Breast epithelium (tissue), 4 donors: ENCODE measurements at regions of chr3 and their contacts with region 1.

Region 1: GRCh38 chr3:27888562-27888961 is 166.4 kb upstream of the EOMES start:
- DNase-seq: no peak
- H3K4me3 ChIP-seq: no peak overlapping the region
- H3K27ac ChIP-seq: no peak overlapping the region
- H3K4me1 ChIP-seq: no peaks in the 10 kb centered on the region
- H3K27me3 ChIP-seq: no peaks in the 10 kb centered on the region
- CTCF ChIP-seq: no peak
- POLR2A ChIP-seq: no peak

Region 2: GRCh38 chr3:28134792-28135375 is 246.3 kb after region 1 on chr3:
- intact Hi-C with region 1: loop called (anchors 5 kb)
- DNase-seq: no peak
- H3K4me3 ChIP-seq: no peak overlapping the region
- H3K27ac ChIP-seq: no peak overlapping the region
- H3K4me1 ChIP-seq: no peaks in the 10 kb centered on the region
- H3K27me3 ChIP-seq: no peaks in the 10 kb centered on the region
- CTCF ChIP-seq: no peak
- POLR2A ChIP-seq: no peak

Region 3: GRCh38 chr3:29649815-29650547 is 1761.4 kb after region 1 on chr3:
- intact Hi-C with region 1: no loop called
- DNase-seq: no peak
- H3K4me3 ChIP-seq: no peak overlapping the region
- H3K27ac ChIP-seq: no peak overlapping the region
- H3K4me1 ChIP-seq: no peaks in the 10 kb centered on the region
- H3K27me3 ChIP-seq: no peaks in the 10 kb centered on the region
- CTCF ChIP-seq: no peak
- POLR2A ChIP-seq: no peak